ENCODE measurements at regions of chr17 and their contacts with region 1.

Region 1: DNA sequence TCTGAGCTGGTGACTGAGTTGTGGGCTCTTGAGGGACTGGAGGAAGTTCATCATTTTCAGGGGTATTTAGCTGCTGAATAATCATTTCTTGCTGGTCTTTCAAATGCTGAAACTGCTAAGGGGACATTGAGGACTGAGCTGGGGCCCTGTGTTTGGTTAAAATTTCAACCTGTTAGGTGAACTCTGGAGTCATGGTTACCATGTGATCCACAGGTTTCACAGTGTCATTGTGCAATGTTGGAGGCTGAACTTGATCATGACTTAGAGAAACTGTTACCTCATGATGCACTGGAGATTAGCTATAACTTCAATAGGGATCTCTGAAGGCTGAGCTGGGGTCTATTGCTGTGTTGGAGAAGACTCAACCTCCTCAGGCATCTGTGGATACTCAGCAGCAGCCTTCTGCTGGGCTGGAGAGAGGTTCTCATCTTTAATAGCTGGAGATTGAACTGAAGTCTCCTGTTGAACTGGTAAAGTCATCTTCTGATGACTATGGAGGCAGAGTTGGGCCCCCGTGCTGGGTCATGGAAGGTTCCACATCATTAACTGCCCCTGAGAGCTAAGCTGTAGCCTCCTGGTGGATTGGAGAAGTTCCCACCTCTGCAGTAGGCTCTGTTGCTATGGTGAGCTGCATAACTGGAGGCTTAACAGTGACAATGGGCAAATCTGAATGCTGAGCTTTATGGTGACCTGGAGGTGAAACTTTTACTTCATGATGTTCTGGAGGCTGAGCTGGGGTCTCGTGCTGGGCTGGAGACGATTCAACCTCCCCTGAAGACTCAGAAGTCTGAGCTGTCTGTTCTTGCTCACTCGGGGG is 15.2 kb downstream of the RDM1 start:
- DNase-seq: no peak
- H3K4me3 ChIP-seq: no peak overlapping the region
- H3K4me3 Mint-ChIP-seq: peak overlapping the region in 3 of 7 donors; percentile 8 to 19 (median 16)
- H3K27ac ChIP-seq: no peak overlapping the region
- H3K27ac Mint-ChIP-seq: peak overlapping the region in 3 of 8 donors; percentile 29 to 73 (median 36)
- H3K4me1 ChIP-seq: peaks cover 22% of the 10 kb centered on the region
- H3K4me1 Mint-ChIP-seq: peaks cover 57 to 85% (median 64%) of the 10 kb centered on the region in 3 donors
- H3K27me3 ChIP-seq: no peaks in the 10 kb centered on the region
- H3K27me3 Mint-ChIP-seq: no peaks in the 10 kb centered on the region

Region 2: GRCh38 chr17:35930211-35931065 is 15.1 kb after region 1 on chr17 and contains the start of gene RDM1:
- CTCF ChIA-PET with region 1: interaction called, 13 read pairs
- POLR2A ChIA-PET with region 1: no interaction called
- DNase-seq: peak; percentile 67 to 89 (median 73)
- H3K4me3 ChIP-seq: peak within 1 kb of the TSS; percentile 74
- H3K4me3 Mint-ChIP-seq: peak within 1 kb of the TSS; percentile 85 to 93 (median 87)
- H3K27ac ChIP-seq: no peak within 1 kb of the TSS
- H3K27ac Mint-ChIP-seq: peak within 1 kb of the TSS; percentile 34 to 79 (median 66)
- H3K4me1 ChIP-seq: peaks cover 6% of the 10 kb centered on the region
- H3K4me1 Mint-ChIP-seq: peaks cover 22 to 35% (median 26%) of the 10 kb centered on the region in 3 donors
- H3K27me3 ChIP-seq: no peaks in the 10 kb centered on the region
- H3K27me3 Mint-ChIP-seq: no peaks in the 10 kb centered on the region
- total RNA-seq, gene RDM1: 2.5 to 3.1 TPM

Region 3: DNA sequence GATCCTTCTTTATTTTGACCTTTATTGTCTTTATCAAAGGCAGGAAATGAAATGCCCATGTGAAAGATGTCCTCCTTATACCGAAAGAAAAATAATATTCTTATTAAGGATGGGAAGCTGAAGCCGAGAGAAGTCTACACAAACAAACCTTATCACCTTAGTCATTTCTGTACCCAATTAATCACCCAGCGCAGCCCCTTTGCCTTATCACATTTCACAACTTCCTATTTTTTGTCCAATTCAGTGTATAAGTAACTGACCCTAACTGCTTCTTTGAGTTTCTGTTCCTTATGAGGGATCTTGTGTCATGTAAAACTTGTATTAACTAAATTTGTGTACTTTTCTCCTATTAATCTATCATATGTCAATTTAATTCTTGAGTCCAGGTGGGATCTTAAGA is 118.8 kb after region 1 on chr17:
- CTCF ChIA-PET with region 1: no interaction called
- POLR2A ChIA-PET with region 1: no interaction called
- DNase-seq: no peak
- H3K4me3 ChIP-seq: no peak overlapping the region
- H3K4me3 Mint-ChIP-seq: no peak overlapping the region
- H3K27ac ChIP-seq: no peak overlapping the region
- H3K27ac Mint-ChIP-seq: no peak overlapping the region
- H3K4me1 ChIP-seq: no peaks in the 10 kb centered on the region
- H3K4me1 Mint-ChIP-seq: no peaks in the 10 kb centered on the region
- H3K27me3 ChIP-seq: no peaks in the 10 kb centered on the region
- H3K27me3 Mint-ChIP-seq: peaks cover 0 to 12% of the 10 kb centered on the region in 2 donors